Activated naive CD8-positive, alpha-beta T cell treated with anti-CD3 and anti-CD28 coated beads, Interleukin-2, amount 10 ng/mL, durations not matched to agents 7 days and 5 days (primary cell): ENCODE measurements at regions of chr17 and their contacts with region 1.

Region 1: DNA sequence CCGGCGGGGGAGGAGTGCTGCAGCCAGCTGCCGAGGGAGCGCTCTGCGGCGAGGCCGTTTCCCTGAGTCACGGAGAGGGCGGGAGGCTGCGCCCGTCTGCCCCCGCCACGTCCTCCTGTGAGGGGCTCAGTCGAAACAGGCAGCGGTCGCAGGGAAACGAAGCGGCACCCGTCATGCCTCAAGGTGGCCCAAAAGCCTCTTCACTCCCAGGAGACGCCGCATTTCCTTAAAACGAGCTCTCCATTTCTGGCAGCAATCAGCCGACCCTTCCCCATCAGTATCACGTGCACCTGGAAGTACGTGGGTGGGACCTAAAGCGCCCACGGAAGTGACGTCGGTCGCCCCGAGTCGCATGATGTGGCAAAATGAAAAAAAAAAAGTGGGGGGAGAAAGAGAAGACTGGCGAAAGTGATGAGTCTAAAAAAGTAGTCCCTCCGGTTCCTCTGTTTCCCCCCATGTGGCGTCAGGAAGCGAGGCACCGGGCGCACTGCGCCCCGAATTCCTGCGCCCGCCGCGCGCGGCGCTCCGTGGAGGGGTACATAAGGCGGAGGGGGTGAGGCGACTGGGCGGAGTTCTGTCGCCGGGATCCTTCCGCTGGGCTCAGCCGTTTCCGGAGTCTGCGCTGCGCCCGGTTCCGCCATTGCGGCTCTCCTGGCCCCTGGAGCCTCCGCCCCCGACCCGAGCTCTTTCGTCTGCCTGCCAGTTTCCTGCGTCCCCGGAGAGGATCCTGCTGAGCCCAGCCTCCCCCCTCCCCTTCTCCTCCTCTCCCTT is at the start of gene CLTC:
- DNase-seq: peak; percentile 94
- ATAC-seq: peak; percentile 89
- H3K4me3 Mint-ChIP-seq: peak within 1 kb of the TSS; percentile 99
- H3K27ac Mint-ChIP-seq: peak within 1 kb of the TSS; percentile 99
- H3K4me1 Mint-ChIP-seq: peaks cover 40% of the 10 kb centered on the region
- H3K27me3 Mint-ChIP-seq: no peaks in the 10 kb centered on the region
- total RNA-seq, gene CLTC: 115 to 117 TPM

Region 2: GRCh38 chr17:59565171-59565969 is 54.1 kb before region 1 on chr17 and contains the start of gene DHX40:
- POLR2A ChIA-PET with region 1: interaction called, 16 read pairs
- DNase-seq: peak; percentile 89
- ATAC-seq: peak; percentile 90
- H3K4me3 Mint-ChIP-seq: peak within 1 kb of the TSS; percentile 96
- H3K27ac Mint-ChIP-seq: peak within 1 kb of the TSS; percentile 95
- H3K4me1 Mint-ChIP-seq: peaks cover 18% of the 10 kb centered on the region
- H3K27me3 Mint-ChIP-seq: peaks cover 2% of the 10 kb centered on the region
- total RNA-seq, gene DHX40: 22.8 to 23.7 TPM

Region 3: GRCh38 chr17:59641799-59642489 is 22.5 kb after region 1 on chr17:
- POLR2A ChIA-PET with region 1: interaction called, 12 read pairs
- DNase-seq: no peak
- ATAC-seq: peak; percentile 92
- H3K4me3 Mint-ChIP-seq: peak overlapping the region; percentile 60
- H3K27ac Mint-ChIP-seq: peak overlapping the region; percentile 35
- H3K4me1 Mint-ChIP-seq: peaks cover 30% of the 10 kb centered on the region
- H3K27me3 Mint-ChIP-seq: no peaks in the 10 kb centered on the region

Region 4: DNA sequence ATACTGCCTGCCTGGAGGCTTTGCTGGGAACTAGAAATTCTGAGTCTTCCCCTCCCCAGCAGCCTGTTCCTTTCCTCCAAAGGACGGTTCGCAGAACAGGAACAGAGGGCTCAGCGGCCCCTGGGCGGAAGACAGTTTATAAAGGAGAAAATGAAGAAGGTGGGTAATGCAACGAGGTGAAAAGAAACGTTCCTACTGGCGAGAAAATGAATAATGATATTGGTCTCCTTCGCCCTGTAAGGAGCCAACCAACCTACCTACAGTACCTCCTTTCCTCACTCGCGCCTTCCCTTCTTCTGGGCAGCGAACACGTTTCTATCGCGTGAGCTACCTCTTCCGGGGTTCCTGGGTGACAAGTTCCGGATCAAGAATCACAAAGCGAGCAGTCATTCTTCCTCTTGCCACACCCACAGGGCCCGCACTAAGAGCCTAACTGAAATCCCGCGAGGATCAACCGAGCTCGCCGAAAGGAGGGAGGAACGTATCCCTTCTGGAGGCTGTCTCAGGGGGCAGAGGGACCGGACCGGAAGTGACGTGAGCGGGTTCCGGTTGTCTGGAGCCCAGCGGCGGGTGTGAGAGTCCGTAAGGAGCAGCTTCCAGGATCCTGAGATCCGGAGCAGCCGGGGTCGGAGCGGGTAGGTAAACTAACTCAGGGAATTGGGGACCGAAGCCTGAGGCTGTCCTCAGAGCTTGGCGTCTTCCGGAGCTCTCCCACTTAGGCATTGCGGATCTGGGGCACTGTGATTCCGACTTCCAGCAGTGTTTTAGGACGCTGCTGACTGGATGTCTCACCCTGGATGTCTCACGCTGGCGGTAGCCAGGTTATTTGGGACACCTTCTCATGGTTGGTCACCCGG is 87.9 kb after region 1 on chr17 and contains the starts of genes PTRH2 and VMP1:
- POLR2A ChIA-PET with region 1: interaction called, 20 read pairs
- DNase-seq: peak; percentile 88
- ATAC-seq: peak; percentile 99
- H3K4me3 Mint-ChIP-seq: peak within 1 kb of the TSS; percentile 95
- H3K27ac Mint-ChIP-seq: peak within 1 kb of the TSS; percentile 95
- H3K4me1 Mint-ChIP-seq: peaks cover 33% of the 10 kb centered on the region
- H3K27me3 Mint-ChIP-seq: no peaks in the 10 kb centered on the region
- total RNA-seq, gene PTRH2: 16.2 to 17.3 TPM
- total RNA-seq, gene VMP1: 114 to 116 TPM

Region 5: GRCh38 chr17:59769891-59770290 is 150.4 kb after region 1 on chr17:
- POLR2A ChIA-PET with region 1: no interaction called
- DNase-seq: no peak
- ATAC-seq: no peak
- H3K4me3 Mint-ChIP-seq: no peak overlapping the region
- H3K27ac Mint-ChIP-seq: no peak overlapping the region
- H3K4me1 Mint-ChIP-seq: peaks cover 8% of the 10 kb centered on the region
- H3K27me3 Mint-ChIP-seq: no peaks in the 10 kb centered on the region